ENCODE measurements at regions of chr7 and their contacts with region 1.

Region 1: DNA sequence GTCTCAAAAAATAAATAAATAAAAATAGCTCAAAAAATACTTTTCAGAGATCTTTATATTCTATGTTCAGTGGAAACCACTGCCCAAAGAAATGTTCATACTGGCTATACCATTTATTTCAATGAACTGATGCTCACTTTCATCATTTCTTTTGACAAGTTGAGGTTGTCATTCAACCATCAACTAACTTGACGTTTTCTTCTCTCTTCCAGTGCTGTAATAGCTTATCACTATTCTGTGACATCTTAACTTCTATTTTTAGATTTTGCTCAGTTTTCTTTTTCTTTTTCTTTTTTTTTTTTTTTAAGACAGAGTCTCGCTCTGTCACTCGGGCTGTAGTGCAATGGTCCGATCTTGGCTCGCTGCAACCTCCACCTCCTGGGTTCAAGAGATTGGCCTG is 8.7 kb upstream of the CTAGE4 start:
- DNase-seq: no peak
- H3K4me3 Mint-ChIP-seq: no peak overlapping the region
- H3K27ac Mint-ChIP-seq: no peak overlapping the region
- H3K4me1 Mint-ChIP-seq: no peaks in the 10 kb centered on the region
- H3K27me3 Mint-ChIP-seq: peaks cover 3% of the 10 kb centered on the region

Region 2: GRCh38 chr7:144391823-144392255 is 217.2 kb after region 1 on chr7:
- CTCF ChIA-PET with region 1: interaction called, 11 read pairs
- POLR2A ChIA-PET with region 1: no interaction called
- DNase-seq: no peak
- H3K4me3 Mint-ChIP-seq: peak overlapping the region; percentile 39
- H3K27ac Mint-ChIP-seq: no peak overlapping the region
- H3K4me1 Mint-ChIP-seq: peaks cover 5% of the 10 kb centered on the region
- H3K27me3 Mint-ChIP-seq: peaks cover 5% of the 10 kb centered on the region